ENCODE measurements at regions of chr22 and their contacts with region 1.

Region 1: DNA sequence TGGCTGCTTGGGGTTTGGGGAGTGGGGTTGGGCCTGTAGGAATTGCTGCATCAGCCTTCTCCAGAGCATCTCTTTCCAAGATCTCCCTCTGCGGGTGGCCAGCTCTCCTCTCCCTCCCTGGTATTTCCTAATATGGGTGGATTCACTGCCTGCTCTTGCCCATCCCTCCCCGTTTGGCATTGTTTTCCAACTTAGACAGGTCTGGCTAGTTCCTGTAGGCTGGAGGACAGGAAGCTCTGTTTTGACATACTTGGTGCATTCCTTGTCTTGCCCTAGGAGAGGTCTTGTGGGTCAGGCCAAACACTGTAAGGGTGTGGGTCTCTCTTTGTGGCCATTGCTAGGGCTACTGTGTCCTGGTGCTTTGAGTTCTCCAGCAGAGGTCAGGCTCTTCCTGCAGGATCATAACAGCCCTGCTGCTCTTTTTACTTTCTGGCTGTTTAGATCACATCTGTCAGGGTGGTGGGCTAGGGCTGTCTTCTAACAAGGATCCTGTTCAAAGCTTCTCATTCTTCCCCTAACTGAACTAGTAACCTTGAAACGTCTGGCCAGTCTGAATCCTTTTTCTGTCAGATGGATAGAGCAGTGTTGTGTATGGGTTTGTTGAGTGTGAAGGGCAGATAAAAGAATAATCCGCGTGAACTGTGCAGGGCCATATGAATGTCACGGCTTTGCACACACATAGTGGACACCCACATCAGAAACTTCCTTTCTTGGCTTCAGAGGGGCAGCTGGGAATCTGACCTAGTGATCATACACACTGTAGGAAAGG is 18.3 kb upstream of the MICALL1 start:
- DNase-seq: no peak
- ATAC-seq: peak; percentile 58; the same call in 1 of the 2 replicates
- H3K4me3 ChIP-seq: no peak overlapping the region
- H3K27ac ChIP-seq: no peak overlapping the region
- H3K4me1 ChIP-seq: peaks cover under 1 to 4% of the 10 kb centered on the region in 2 experiments; a peak in 1 of 4 replicates
- H3K27me3 ChIP-seq: no peaks in the 10 kb centered on the region
- CTCF ChIP-seq: peak; percentile 39 to 44 (median 42); a peak in 5 of 6 replicates
- POLR2A ChIP-seq: no peak
- RAD21 ChIP-seq: peak; percentile 64

Region 2: DNA sequence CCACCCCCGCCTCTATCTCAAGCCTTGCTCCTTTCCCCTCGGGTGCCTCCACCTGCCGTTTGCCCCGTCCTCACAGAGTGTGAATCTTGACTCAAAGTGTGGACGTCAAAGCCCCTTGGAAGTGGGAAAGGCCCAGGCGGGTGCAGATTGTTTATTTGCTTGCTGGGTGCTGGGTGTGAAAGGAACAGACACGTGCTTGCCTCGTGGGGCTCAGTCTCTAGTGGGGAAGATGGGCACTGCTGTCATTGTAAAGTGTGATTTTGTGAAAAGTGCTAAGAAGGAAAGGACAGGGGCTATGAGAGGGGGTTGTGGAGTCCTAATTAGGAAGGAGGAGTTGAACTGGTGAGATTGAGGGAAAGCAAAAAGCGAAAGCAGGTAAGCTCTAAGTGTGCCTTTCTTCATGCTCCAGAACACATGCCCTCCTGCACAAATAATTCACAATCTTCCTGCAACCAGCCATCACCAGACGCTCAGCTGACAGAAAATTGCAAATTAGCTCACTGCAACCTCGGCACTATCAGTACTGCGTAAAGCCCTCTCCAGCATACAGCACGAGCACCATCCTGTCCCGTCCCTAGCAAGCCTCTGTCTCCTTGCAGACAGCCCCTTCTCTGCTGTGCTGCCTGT is 89.8 kb before region 1 on chr22:
- CTCF ChIA-PET with region 1: no interaction called
- POLR2A ChIA-PET with region 1: no interaction called
- RAD21 ChIA-PET with region 1: no interaction called
- intact Hi-C with region 1: no loop called
- DNase-seq: no peak
- ATAC-seq: no peak
- H3K4me3 ChIP-seq: no peak overlapping the region
- H3K27ac ChIP-seq: no peak overlapping the region
- H3K4me1 ChIP-seq: peaks cover 8 to 22% of the 10 kb centered on the region in 2 experiments; a peak in 3 of 4 replicates
- H3K27me3 ChIP-seq: no peaks in the 10 kb centered on the region
- CTCF ChIP-seq: no peak
- POLR2A ChIP-seq: no peak
- RAD21 ChIP-seq: no peak

Region 3: DNA sequence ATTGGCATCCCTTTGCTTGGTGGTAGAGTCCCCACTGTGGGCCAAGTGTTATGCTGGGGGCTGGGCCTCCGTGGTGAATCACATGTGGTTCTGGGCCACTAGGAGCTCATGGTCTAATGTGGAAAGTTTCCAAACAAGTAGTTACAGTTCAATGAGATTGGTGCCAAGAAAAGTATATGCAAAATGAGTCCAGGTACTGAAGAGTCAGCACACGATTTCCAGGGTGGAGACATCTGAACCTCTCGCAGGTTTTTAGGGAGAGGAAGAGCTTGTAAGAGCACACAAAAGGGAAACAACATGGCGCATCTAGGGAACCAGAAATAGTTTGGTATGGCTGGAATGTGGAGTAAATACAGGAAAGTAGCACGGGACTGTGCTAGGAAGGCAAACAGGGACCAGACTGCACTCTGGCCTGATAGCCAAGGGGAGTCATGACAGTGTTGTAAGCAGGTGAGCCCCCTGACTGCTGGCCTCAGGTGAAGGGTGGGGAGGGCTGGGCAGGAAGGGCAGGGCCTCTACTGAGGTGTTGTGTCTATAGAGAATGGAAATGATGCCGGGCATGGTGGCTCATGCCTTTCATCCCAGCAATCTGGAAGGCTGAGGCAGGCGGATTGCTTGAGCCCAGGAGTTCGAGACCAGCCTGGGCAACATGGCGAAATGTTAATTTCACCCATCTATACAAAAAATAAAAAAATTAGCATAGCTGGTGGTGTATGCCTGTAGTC is 78.3 kb after region 1 on chr22:
- CTCF ChIA-PET with region 1: interaction called, 5 read pairs
- POLR2A ChIA-PET with region 1: no interaction called
- RAD21 ChIA-PET with region 1: no interaction called
- intact Hi-C with region 1: loop called (anchors 1 kb)
- DNase-seq: no peak
- ATAC-seq: no peak
- H3K4me3 ChIP-seq: no peak overlapping the region
- H3K27ac ChIP-seq: no peak overlapping the region
- H3K4me1 ChIP-seq: peaks cover 0 to 11% of the 10 kb centered on the region in 2 experiments; a peak in 2 of 4 replicates
- H3K27me3 ChIP-seq: no peaks in the 10 kb centered on the region
- CTCF ChIP-seq: no peak
- POLR2A ChIP-seq: no peak
- RAD21 ChIP-seq: no peak

Region 4: GRCh38 chr22:37999956-38000272 is 112.1 kb after region 1 on chr22:
- CTCF ChIA-PET with region 1: no interaction called
- POLR2A ChIA-PET with region 1: no interaction called
- RAD21 ChIA-PET with region 1: no interaction called
- intact Hi-C with region 1: no loop called
- DNase-seq: peak; percentile 75
- ATAC-seq: peak; percentile 92
- H3K4me3 ChIP-seq: peak overlapping the region in 1 of 2 experiments; percentile 9; a peak in 2 of 4 replicates
- H3K27ac ChIP-seq: peak overlapping the region; percentile 50
- H3K4me1 ChIP-seq: peaks cover 20 to 43% of the 10 kb centered on the region in 2 experiments
- H3K27me3 ChIP-seq: no peaks in the 10 kb centered on the region
- CTCF ChIP-seq: peak in 1 of 3 experiments; percentile 15; a peak in 1 of 6 replicates
- POLR2A ChIP-seq: peak; percentile 10
- RAD21 ChIP-seq: no peak